Activated naive CD4-positive, alpha-beta T cell treated with anti-CD3 and anti-CD28 coated beads for 36 hours (primary cell): ENCODE measurements at regions of chr11 and their contacts with region 1.

Region 1: DNA sequence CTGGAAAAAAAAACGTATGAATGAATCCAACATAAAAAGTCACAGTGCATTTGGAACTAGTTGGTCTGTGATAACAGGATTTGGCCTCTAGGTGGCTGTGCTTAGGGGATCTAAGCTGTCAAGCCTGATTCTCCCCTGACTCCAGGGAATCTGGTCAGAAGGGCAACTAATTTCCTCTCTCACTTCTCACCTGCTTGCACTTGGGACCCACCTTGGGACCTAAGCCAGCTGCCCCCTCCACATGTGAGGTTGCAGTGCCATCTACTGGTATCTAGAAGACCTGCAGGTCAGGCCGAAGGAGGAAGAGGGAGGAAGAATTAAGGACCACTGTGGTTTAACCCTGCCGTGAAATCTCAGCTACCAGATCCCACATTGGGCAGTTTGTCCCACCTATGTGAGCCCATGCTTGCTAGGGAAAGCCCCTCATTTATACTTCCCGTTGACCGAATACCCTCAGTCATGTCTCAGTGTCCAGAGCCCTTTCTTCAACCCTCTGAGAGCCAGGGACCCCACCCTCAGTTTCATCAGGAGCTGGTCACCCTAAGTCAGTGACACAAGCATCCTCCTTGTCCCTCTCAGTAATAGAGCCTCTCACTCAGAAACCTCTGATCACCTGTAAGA is 33.2 kb upstream of the CAVIN3 start:
- DNase-seq: peak; percentile 67
- H3K4me3 Mint-ChIP-seq: no peak overlapping the region
- H3K27ac Mint-ChIP-seq: no peak overlapping the region
- H3K4me1 Mint-ChIP-seq: peaks cover 9% of the 10 kb centered on the region
- H3K27me3 Mint-ChIP-seq: no peaks in the 10 kb centered on the region

Region 2: DNA sequence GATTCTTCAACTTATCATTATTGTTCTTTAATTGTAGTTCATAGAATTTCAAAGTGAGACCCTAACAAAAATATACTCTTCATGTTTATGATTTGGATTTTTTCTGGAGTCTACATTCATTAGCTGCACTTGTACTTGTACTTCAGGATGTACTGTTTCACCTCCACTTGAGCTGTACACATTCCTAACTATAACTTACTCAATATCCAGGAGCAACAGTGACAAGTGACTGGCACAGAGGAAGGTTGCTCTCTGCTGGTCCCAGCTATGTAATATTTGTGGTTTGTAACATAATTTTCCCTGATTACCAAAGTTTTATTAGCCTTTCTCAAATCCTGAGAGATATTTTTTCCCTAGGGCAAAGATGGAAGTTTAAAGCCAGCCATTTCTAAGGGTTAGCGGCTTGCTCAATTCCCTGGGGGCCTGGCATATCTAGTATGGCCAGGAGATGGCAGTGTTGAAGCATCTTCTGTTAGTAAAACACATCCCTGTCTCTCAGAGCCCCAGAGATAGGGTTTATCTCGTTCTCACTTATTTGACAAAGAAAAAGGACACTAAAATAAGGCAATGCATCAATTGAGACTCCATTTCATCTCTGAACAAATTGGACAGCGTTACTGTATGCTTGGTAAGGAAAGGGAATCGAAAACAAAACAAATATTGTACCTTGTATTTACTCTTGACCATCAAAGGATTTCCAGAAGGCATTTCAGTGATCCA is 1229.5 kb before region 1 on chr11:
- CTCF ChIA-PET with region 1: no interaction called
- intact Hi-C with region 1: loop called (anchors 10 kb)
- DNase-seq: peak; percentile 74
- H3K4me3 Mint-ChIP-seq: no peak overlapping the region
- H3K27ac Mint-ChIP-seq: no peak overlapping the region
- H3K4me1 Mint-ChIP-seq: no peaks in the 10 kb centered on the region
- H3K27me3 Mint-ChIP-seq: peaks cover 22% of the 10 kb centered on the region

Region 3: DNA sequence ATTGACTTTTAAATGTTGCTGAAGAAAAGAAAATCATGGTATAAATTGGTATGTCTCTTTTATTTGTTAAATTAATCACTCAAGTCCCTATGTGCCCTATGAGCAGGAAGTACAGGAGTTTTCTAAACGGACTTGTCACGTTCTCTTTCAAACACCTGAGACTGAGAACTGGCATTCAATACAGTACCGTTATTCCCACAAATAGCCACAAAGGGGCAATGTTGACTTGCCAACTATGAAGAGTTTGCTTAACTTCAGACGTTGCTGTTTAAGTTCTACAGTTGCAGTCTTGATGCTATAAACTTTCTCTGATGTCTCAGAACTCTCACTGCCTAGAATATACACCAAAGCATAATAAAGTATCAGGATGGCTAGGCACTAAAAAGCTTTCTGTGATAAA is 330.5 kb before region 1 on chr11:
- CTCF ChIA-PET with region 1: interaction called, 11 read pairs
- intact Hi-C with region 1: loop called (anchors 2 kb)
- DNase-seq: peak; percentile 28
- H3K4me3 Mint-ChIP-seq: no peak overlapping the region
- H3K27ac Mint-ChIP-seq: no peak overlapping the region
- H3K4me1 Mint-ChIP-seq: no peaks in the 10 kb centered on the region
- H3K27me3 Mint-ChIP-seq: peaks cover 20% of the 10 kb centered on the region

Region 4: DNA sequence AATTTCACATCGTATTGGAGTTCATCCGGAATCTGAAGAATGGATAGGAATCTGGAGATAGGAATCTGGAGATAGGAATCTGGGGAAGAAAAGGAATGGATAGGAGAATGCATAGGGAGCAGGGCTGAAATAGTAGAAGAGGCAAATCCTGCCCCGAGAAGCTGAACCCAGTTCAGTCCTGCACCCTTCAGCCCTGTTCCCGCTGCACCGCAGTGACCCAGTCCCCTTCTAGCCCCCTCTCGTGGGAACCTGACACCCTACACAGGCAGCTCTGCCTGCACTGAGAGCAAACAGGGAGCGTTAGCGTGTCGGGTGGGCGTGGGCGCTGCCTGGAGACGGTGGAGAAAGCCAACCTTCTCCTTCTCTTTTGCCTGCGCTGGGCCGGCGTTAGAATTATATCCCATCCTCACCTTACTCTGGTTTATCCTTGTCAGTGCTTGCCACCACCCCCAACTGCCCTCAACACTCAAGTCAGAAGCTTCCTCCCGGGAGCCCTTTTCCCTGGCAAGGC is 94.9 kb before region 1 on chr11:
- CTCF ChIA-PET with region 1: interaction called, 105 read pairs
- intact Hi-C with region 1: loop called (anchors 2 kb)
- DNase-seq: peak; percentile 13
- H3K4me3 Mint-ChIP-seq: no peak overlapping the region
- H3K27ac Mint-ChIP-seq: no peak overlapping the region
- H3K4me1 Mint-ChIP-seq: no peaks in the 10 kb centered on the region
- H3K27me3 Mint-ChIP-seq: peaks cover 7% of the 10 kb centered on the region

Region 5: GRCh38 chr11:6298605-6299004 is 54.9 kb before region 1 on chr11:
- CTCF ChIA-PET with region 1: interaction called, 17 read pairs
- intact Hi-C with region 1: loop called (anchors 1 kb)
- DNase-seq: peak; percentile 43
- H3K4me3 Mint-ChIP-seq: no peak overlapping the region
- H3K27ac Mint-ChIP-seq: no peak overlapping the region
- H3K4me1 Mint-ChIP-seq: no peaks in the 10 kb centered on the region
- H3K27me3 Mint-ChIP-seq: peaks cover 4% of the 10 kb centered on the region

Region 6: GRCh38 chr11:6568191-6568918 is 214.9 kb after region 1 on chr11:
- CTCF ChIA-PET with region 1: no interaction called
- intact Hi-C with region 1: no loop called
- DNase-seq: no peak
- H3K4me3 Mint-ChIP-seq: no peak overlapping the region
- H3K27ac Mint-ChIP-seq: no peak overlapping the region
- H3K4me1 Mint-ChIP-seq: no peaks in the 10 kb centered on the region
- H3K27me3 Mint-ChIP-seq: no peaks in the 10 kb centered on the region

Region 7: DNA sequence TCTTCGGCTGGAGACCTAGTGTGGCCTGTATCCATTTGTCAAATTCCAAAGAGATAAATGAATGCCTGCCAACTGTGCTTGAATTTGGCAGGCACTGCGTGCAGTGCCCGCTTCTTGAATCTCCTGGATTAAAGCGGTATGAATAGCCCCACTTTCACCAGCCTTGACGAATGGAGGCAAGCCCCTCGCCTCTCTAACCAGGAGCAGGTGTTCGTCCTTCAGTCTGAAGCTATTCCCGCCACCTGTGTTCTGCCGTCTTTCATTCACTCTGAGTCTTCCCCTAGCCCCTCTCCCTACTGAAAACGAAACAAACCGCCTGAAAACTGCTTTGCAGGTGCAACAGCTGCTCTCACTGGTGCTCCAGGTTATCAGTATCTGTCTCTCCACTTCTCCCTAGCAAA is 678.0 kb after region 1 on chr11:
- CTCF ChIA-PET with region 1: no interaction called
- intact Hi-C with region 1: no loop called
- DNase-seq: no peak
- H3K4me3 Mint-ChIP-seq: no peak overlapping the region
- H3K27ac Mint-ChIP-seq: no peak overlapping the region
- H3K4me1 Mint-ChIP-seq: no peaks in the 10 kb centered on the region
- H3K27me3 Mint-ChIP-seq: peaks cover 4% of the 10 kb centered on the region